ENCODE measurements at regions of chr5 and their contacts with region 1.

Region 1: DNA sequence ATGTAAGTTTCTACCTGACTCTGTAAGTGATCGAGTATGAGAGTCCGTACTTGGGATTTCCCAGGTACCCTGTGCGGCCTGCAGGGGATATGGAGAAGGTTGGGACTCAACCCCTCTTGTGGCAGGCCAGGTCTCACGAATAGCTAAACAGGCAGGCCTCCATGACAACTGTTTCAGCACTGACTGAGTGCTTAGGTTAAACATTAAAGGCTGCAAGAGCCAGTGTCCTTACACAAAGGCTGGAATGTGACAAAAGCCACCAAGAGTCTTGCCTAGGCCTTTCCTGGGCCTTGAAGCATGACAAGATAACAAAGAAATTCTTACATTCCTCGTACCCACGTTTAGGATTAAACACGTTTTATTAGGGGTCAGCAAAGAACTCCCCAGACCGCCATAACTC is 58.6 kb downstream of the THBS4 start:
- DNase-seq: no peak

Region 2: DNA sequence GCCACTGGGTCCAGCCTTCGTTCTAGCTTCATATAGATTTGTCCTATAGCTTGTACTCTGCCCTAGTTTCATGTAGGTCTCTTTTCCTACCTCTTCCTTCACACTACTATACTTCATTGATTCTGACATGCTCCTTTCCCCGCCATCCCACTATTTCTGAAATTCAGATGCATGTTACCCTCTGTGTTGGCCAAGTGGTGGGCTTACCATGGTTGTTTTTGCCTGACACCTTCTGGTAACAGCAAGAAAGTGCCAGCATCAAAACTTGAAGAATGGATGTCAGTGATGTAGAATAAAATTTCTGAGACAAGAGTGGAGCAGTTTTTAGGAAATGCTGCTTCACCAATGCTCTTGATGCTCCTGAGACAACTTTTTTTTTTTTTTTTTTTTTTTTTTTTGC is 181.6 kb after region 1 on chr5:
- intact Hi-C with region 1: loop called in 1 of 2 experiments (anchors 10 kb)
- DNase-seq: no peak

Region 3: GRCh38 chr5:80308526-80308925 is 214.7 kb after region 1 on chr5:
- intact Hi-C with region 1: loop called in 1 of 2 experiments (anchors 2 kb)
- DNase-seq: no peak

Region 4: GRCh38 chr5:81980598-81981260 is 1886.9 kb after region 1 on chr5:
- intact Hi-C with region 1: no loop called
- DNase-seq: no peak

Measured in posterior vena cava (tissue), 2 donors.